ENCODE measurements at regions of chrX and their contacts with region 1.

Region 1: DNA sequence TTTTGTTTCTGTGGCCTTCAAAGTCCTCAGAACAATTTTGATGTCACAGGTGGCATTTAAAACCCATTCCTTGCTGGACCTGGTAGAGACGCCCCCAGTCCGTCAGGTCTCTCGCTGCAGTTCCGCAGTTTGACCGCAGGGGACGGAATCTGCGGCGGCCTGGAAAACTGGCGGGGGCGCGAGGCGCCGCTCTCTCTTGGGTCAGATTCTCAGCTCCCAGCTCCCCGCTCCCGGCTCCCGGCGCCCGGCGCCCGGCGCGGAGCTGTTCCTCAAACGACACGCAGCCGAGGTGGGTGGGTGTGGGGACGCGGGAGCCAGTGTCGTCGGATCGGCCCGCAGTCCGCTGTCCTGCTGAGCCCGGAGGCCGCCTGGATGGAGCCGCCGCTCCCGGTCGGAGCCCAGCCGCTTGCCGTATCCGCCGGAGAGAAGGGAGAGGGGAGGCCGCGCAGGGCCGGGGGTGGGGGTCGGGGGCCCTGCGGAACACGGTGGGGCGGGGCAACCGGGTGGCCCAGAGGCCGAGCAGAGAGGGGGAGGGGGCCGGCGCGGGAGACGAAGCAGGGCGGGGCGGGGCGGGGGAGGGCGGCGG is at the start of gene OCRL:
- DNase-seq: peak; percentile 73
- ATAC-seq: peak; percentile 83
- H3K4me3 Mint-ChIP-seq: peak within 1 kb of the TSS; percentile 69
- H3K27ac Mint-ChIP-seq: no peak within 1 kb of the TSS
- H3K4me1 Mint-ChIP-seq: peaks cover 5% of the 10 kb centered on the region
- H3K27me3 Mint-ChIP-seq: no peaks in the 10 kb centered on the region
- total RNA-seq, gene OCRL: 3.5 to 3.8 TPM

Region 2: DNA sequence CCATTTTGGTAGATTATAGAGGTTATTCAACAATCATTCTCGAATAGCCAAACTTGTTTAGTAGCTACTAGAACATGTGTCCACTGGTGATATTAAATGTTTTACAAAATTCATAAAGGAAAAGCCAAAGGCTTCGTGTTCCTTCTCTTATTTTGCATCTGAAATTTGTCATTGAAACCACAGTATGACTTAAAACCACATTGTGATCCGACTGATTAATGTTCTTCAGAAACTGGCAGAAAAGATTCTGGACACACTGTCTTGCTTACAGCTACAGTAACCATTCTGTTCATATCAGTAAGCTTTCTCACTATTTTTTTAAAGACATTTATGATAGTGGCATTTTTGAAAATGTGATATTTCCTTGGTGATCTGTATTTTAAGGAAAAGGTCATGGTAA is 14.3 kb before region 1 on chrX:
- CTCF ChIA-PET with region 1: interaction called, 4 read pairs
- POLR2A ChIA-PET with region 1: no interaction called
- intact Hi-C with region 1: loop called in 1 of 2 experiments (anchors 2 kb)
- DNase-seq: no peak
- ATAC-seq: no peak
- H3K4me3 Mint-ChIP-seq: no peak overlapping the region
- H3K27ac Mint-ChIP-seq: no peak overlapping the region
- H3K4me1 Mint-ChIP-seq: no peaks in the 10 kb centered on the region
- H3K27me3 Mint-ChIP-seq: peaks cover 10% of the 10 kb centered on the region

Region 3: DNA sequence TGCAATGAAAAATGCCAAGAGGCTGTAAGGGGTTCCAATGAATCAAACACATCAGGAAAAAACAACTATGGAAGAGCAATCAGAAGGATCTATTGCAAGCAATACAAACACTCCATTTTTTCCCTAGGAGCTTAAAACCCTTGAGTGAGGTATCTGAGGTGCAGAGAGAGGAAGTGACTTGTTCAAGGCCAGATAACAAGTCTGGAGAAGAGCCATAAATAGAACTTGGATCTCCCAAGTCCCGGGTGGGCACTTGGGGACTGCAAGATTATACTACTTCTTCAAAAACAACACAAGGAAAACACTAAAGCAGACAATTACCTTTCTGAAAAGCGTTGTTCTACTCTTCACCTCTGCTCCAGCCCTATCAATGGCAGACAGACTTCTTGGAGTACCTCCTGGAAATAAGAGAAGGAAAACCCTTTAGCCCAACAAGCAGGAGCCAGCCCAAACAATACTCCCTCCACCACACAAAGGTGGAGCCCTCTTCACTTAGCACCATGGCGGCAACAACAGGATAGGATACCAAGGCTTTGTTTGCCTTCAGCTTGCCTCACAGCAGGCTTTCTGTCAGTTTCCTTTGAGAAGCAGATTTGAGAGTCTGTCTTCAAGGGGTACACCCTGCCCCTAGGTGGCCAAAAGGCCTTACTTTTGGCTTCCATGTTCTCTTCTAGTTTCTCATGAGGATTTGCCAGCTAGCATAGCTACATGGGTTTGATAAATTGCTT is 599.5 kb after region 1 on chrX:
- CTCF ChIA-PET with region 1: no interaction called
- POLR2A ChIA-PET with region 1: no interaction called
- intact Hi-C with region 1: no loop called
- DNase-seq: no peak
- ATAC-seq: no peak
- H3K4me3 Mint-ChIP-seq: no peak overlapping the region
- H3K27ac Mint-ChIP-seq: no peak overlapping the region
- H3K4me1 Mint-ChIP-seq: no peaks in the 10 kb centered on the region
- H3K27me3 Mint-ChIP-seq: no peaks in the 10 kb centered on the region

Measured in activated CD4-positive, alpha-beta T cell treated with anti-CD3 and anti-CD28 coated beads for 36 hours (primary cell).